Left ventricle myocardium superior (tissue), 1 donor: ENCODE measurements at regions of chr3 and their contacts with region 1.

Region 1: GRCh38 chr3:191244242-191244867 is 45.3 kb downstream of the OSTN start:
- DNase-seq: no peak
- ATAC-seq: no peak

Region 2: DNA sequence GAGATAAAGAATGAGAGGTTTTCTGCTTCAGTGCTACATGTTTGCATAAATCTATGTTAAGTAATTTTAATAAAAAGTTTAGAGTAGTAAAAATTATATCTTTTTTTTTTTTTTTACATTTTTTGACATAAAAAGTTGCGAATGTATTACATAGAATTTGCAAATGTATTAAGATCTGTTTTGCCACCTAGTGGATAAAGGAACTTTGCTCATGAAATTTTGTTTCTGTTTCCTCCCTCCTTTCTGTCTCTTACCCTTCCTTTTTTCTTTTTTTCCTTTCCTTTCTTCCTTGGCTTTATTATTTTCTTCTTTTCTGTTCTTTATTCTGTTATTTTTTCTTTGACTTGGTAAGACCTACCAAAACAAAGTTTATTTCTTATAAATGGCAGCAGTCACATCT is 144.5 kb after region 1 on chr3:
- intact Hi-C with region 1: loop called (anchors 10 kb)
- DNase-seq: no peak
- ATAC-seq: no peak